Tibial artery (tissue), 4 donors: ENCODE measurements at regions of chr9 and their contacts with region 1.

Region 1: GRCh38 chr9:21402386-21403251 is 6.3 kb upstream of the IFNA8 start:
- DNase-seq: no peak
- H3K4me3 ChIP-seq: peak overlapping the region; percentile 6 to 13
- H3K27ac ChIP-seq: no peak overlapping the region
- H3K4me1 ChIP-seq: peaks cover 0 to 22% (median 5%) of the 10 kb centered on the region in 4 donors
- H3K27me3 ChIP-seq: peaks cover 7 to 35% of the 10 kb centered on the region in 2 donors
- CTCF ChIP-seq: no peak

Region 2: DNA sequence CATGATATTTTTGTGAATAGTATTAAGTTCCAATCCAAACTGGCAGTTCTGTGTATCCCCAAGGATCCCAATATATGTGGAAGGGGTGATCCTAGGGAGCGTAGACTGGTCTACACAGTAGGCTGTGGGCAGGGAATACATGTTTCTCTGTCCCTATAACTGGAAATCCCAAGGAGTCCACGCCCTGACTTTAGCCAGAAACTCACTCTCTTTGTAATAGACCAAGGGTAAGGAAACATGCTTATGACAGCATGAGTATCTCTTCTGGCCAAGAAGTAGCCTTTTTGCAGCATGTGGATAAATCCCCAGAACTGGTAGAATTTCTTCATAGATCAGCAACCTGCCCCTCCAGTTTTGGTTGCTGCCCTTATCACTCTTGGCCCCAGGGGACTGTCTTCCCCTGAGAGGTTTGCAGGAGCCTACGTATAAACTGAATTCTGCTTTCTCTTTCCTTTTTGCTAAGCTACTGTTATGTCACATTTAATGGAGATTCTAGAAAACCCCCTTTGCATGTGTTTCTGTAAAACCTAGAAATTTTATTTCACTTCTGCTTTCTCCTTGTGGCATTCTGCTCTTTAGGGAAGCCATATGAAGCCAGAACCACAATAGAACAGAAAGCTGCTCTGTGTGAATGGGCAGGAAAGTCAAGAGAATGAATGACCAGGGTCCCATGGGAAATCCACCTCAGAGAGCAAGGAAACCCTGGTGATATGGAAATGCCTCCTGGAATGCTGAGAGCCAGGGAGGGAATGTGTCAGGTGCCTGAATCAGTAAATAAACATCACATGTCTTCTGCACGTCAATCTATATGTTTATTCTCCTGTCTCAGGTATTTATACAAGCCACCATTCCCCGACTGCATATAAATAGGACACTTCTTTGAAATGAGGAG is 20.9 kb before region 1 on chr9:
- intact Hi-C with region 1: loop called (anchors 2 kb)
- DNase-seq: no peak
- H3K4me3 ChIP-seq: no peak overlapping the region
- H3K27ac ChIP-seq: no peak overlapping the region
- H3K4me1 ChIP-seq: no peaks in the 10 kb centered on the region
- H3K27me3 ChIP-seq: peaks cover 0 to 19% of the 10 kb centered on the region in 2 donors
- CTCF ChIP-seq: no peak